HEK293 (cell line): ENCODE measurements at regions of chr6 and their contacts with region 1.

Region 1: GRCh38 chr6:70955441-70956190 is 1.2 kb downstream of the B3GAT2 start:
- H3K4me3 ChIP-seq: peak overlapping the region; percentile 57
- H3K27ac ChIP-seq: no peak overlapping the region; the same call in 1 of the 2 replicates
- H3K4me1 ChIP-seq: no peaks in the 10 kb centered on the region
- CTCF ChIP-seq: peak; percentile 96

Region 2: GRCh38 chr6:70520575-70520974 is 435.0 kb before region 1 on chr6:
- CTCF ChIA-PET with region 1: interaction called, 10 read pairs
- POLR2A ChIA-PET with region 1: no interaction called
- H3K4me3 ChIP-seq: no peak overlapping the region
- H3K27ac ChIP-seq: no peak overlapping the region
- H3K4me1 ChIP-seq: no peaks in the 10 kb centered on the region
- CTCF ChIP-seq: 0 out of 2 replicates have a peak, but pooled peaks have one; percentile 27

Region 3: DNA sequence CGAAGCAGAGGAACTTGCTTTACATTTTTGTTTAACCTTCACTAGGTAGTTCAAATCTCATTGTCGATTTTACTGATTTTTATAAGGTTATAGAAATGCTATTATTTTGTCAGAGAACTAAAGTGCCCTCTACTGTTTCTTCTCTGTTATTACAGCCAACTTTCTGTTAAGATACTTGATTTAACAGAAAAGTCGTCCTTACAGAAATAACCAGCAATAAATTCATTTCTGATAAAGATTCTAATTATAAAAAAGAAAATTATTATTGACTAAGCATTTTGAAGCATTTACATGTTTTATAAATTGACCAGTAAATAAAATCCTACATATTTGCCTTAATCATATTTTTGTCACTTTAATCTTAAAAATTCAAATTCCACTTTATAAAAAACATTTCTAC is 393.8 kb after region 1 on chr6:
- CTCF ChIA-PET with region 1: interaction called, 10 read pairs
- POLR2A ChIA-PET with region 1: no interaction called
- H3K4me3 ChIP-seq: no peak overlapping the region
- H3K27ac ChIP-seq: no peak overlapping the region
- H3K4me1 ChIP-seq: no peaks in the 10 kb centered on the region
- CTCF ChIP-seq: no peak